ENCODE measurements at regions of chr17 and their contacts with region 1.

Region 1: DNA sequence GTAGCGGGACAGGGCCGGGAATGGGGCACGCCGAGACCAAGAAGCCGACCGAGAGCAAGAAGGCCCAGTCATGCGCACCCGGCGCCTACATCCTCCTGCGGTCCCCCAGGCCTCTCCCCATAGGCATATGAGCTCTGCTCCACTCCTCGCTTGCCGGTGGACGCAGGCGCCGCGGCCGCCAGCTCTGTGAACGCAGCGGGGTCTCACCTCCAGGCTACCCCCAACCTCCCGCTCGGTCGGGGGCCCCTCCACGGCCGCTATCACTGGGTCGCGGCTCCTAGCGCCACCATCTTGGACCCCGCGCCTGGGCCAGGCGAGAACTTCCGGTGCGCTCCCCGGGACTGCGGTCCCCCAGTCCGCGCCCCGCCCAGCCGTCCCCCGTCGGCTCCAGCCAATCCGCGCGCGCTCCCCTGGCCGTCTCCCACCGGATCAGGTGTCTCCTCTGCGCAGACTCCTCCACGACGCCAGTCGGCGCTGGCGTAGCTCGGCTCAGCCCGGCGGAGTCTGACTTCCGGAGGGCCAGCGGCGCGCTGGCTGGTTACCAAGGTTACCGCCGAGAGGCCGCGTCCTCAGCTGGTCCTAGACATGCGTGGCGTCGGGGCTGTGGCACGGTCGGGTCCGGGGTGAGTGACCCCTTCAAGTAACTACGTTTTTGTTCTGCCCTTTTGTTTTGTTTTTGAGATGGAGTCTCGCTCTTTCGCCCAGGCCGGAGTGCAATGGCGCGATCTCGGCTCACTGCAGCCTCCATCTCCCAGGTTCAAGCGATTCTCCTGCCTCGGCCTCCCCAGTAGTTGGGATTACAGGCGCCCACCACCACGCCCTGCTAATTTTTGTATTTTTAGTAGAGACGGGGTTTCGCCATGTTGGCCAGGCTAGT is at the start of gene ZNF594:
- DNase-seq: peak; percentile 97
- ATAC-seq: peak; percentile 99
- H3K4me3 ChIP-seq: peak within 1 kb of the TSS; percentile 53 to 99 (median 79)
- H3K4me3 Mint-ChIP-seq: peak within 1 kb of the TSS; percentile 95
- H3K27ac ChIP-seq: peak within 1 kb of the TSS; percentile 83 to 85
- H3K27ac Mint-ChIP-seq: peak within 1 kb of the TSS; percentile 94
- H3K4me1 ChIP-seq: peaks cover 16 to 25% of the 10 kb centered on the region in 2 donors
- H3K4me1 Mint-ChIP-seq: peaks cover 30% of the 10 kb centered on the region
- H3K27me3 ChIP-seq: no peaks in the 10 kb centered on the region
- H3K27me3 Mint-ChIP-seq: no peaks in the 10 kb centered on the region
- CTCF ChIP-seq: peak; percentile 75
- total RNA-seq, gene ZNF594: 36.2 and 38.9 TPM in 2 replicates

Region 2: DNA sequence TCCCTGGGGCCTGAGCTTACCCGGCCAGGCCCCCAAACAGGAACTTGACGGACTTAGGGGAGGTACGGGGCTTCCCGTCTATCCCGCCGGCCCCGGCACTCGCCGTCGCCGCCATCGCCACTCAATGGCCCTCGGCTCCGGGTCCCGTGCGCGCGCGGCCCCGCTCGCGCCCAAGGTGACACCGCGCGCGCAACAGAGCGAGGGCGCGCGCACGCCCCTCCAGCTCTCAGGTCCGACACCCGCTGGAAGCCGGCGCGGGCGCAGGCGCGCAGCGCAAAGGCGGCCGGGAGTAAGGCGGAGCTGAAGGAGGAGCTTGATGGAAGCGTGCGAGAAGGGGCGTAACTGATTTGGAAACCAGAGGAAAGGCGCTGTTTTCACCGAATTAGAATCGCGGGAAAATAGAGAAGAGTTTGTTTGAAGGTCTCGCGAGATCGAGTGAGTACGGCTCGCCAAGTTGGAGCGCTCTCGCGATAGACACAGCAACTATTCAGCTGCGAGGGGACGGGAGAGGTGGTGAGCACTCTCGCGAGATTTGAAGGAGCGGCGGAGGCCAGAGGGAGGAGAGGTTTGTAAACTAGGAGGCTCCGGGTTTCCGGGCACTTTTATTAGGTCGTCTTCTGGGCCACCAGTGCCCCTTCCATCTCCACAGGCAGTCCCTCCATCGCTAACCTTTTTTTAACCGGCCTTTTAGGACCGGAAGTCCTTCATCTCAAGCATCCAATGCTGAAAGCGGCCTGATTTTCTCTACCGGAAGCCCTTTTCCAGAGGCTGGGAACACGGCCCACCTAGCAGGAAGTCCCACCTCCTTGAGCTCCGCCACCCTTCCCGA is 251.8 kb before region 1 on chr17 and contains the starts of genes RNF167 and SLC25A11:
- CTCF ChIA-PET with region 1: no interaction called
- POLR2A ChIA-PET with region 1: interaction called, 7 read pairs
- intact Hi-C with region 1: loop called (anchors 10 kb)
- DNase-seq: peak; percentile 99
- ATAC-seq: peak; percentile 84
- H3K4me3 ChIP-seq: peak within 1 kb of the TSS; percentile 83 to 100 (median 86)
- H3K4me3 Mint-ChIP-seq: peak within 1 kb of the TSS; percentile 89
- H3K27ac ChIP-seq: peak within 1 kb of the TSS; percentile 84 to 87
- H3K27ac Mint-ChIP-seq: peak within 1 kb of the TSS; percentile 95
- H3K4me1 ChIP-seq: peaks cover 50 to 59% of the 10 kb centered on the region in 2 donors
- H3K4me1 Mint-ChIP-seq: peaks cover 58% of the 10 kb centered on the region
- H3K27me3 ChIP-seq: no peaks in the 10 kb centered on the region
- H3K27me3 Mint-ChIP-seq: no peaks in the 10 kb centered on the region
- CTCF ChIP-seq: no peak
- total RNA-seq, gene RNF167: 131 and 143 TPM in 2 replicates
- total RNA-seq, gene SLC25A11: 32.3 and 42.7 TPM in 2 replicates

Region 3: DNA sequence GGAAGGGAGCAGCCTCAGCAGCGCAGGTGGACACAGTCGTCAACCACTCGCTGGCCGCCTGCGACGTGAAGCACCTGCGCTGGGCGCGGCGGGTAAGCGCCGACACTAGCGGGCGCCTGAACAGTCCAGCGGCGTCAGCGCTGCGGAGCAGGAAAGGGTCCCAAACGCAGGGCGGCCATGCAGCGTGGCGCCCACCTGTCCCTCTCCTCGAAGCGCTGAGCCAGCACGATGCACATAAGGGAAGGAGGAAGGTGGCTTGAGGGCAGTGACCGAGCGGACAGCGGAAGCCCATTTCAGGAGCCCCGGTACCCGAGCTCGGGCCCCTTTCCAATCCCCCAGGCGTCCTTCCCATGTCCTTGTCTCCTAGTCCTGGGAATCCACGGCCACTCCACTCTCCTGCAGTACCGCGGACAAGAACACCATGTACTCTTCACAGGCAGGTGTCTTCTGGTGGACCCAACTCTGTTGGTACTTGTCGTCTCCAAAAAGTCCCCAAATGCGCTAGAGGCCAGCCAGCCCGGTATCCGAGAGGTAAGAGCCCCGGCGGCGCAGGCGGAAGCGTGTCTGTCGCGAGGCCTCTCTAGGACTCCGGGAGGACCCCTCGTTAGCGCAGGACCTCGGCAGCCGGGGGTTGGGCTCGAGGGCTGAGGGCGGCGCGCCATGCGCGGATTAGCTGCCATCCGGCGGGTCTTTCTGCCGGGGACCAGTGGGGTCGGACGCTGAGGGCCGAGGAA is 94.5 kb before region 1 on chr17:
- CTCF ChIA-PET with region 1: no interaction called
- POLR2A ChIA-PET with region 1: interaction called, 8 read pairs
- intact Hi-C with region 1: loop called (anchors 5 kb)
- DNase-seq: peak; percentile 81
- ATAC-seq: peak; percentile 93
- H3K4me3 ChIP-seq: peak overlapping the region; percentile 17 to 79 (median 71)
- H3K4me3 Mint-ChIP-seq: peak overlapping the region; percentile 97
- H3K27ac ChIP-seq: peak overlapping the region; percentile 33 to 76
- H3K27ac Mint-ChIP-seq: peak overlapping the region; percentile 90
- H3K4me1 ChIP-seq: peaks cover 4 to 14% of the 10 kb centered on the region in 2 donors
- H3K4me1 Mint-ChIP-seq: peaks cover 12% of the 10 kb centered on the region
- H3K27me3 ChIP-seq: peaks cover 0 to 3% (median 0%) of the 10 kb centered on the region in 4 experiments
- H3K27me3 Mint-ChIP-seq: no peaks in the 10 kb centered on the region
- CTCF ChIP-seq: no peak

Region 4: DNA sequence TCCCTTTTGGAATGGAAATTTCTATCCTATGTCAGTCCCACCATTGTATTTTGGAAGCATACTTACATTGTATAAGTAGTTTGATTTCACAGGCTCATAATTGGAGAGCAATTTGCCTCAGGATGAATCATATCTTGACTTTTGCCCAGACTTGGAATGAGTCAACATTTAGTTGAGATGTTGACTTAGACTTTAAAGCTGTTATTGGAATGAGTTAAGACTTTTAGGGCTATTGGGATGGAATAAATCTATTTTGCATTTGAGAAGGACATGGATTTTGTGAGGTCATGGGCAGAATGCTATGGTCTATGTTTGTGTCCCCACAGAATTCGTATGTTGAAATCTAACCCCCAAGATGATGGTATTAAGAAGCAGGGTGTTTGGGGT is 12.1 kb after region 1 on chr17:
- CTCF ChIA-PET with region 1: interaction called, 38 read pairs
- POLR2A ChIA-PET with region 1: no interaction called
- intact Hi-C with region 1: no loop called
- DNase-seq: no peak
- ATAC-seq: no peak
- H3K4me3 ChIP-seq: no peak overlapping the region
- H3K4me3 Mint-ChIP-seq: no peak overlapping the region
- H3K27ac ChIP-seq: peak overlapping the region in 1 of 2 donors; percentile 45
- H3K27ac Mint-ChIP-seq: peak overlapping the region; percentile 78
- H3K4me1 ChIP-seq: peaks cover 33 to 61% of the 10 kb centered on the region in 2 donors
- H3K4me1 Mint-ChIP-seq: peaks cover 54% of the 10 kb centered on the region
- H3K27me3 ChIP-seq: no peaks in the 10 kb centered on the region
- H3K27me3 Mint-ChIP-seq: no peaks in the 10 kb centered on the region
- CTCF ChIP-seq: no peak

Region 5: DNA sequence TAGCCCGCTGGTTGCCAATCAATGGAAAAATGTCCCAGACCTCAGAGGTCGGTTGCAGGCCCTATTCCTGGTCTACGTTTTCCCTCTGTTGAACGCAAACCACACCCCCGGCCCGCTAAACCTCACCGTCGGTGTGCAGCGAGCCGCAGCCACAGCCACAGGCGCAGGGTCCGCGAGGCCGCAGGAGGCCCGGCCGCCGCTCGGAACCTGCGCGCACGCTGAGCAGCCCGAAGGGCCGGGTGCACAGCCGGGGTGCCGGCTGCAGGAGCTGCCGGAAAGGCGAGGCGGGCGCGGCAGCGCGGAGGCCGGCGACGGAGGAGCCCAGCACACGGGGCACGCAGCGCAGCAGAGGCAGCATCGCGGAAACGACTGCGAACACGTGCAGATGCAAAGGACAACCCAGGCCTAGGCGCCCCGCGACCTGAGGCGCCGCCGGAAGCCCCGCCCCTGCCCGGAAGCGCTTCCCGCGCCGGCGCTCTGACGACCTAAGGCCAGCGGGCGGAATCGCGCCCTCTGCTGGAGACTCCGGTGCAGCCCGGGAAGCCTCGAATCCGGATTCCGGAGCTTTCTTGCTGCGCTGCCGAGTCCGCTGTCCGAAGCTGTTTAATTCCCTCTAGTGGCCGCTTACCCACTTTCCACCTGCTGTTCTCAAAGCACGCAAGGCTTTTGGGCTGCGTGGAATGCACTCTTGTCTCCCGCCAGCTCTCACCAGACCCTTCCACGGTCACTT is 247.1 kb after region 1 on chr17 and contains the start of gene C1QBP:
- CTCF ChIA-PET with region 1: interaction called, 16 read pairs
- POLR2A ChIA-PET with region 1: interaction called, 4 read pairs
- intact Hi-C with region 1: loop called (anchors 1 kb)
- DNase-seq: peak; percentile 96
- ATAC-seq: peak; percentile 95
- H3K4me3 ChIP-seq: peak within 1 kb of the TSS; percentile 52 to 74 (median 67)
- H3K4me3 Mint-ChIP-seq: peak within 1 kb of the TSS; percentile 79
- H3K27ac ChIP-seq: peak within 1 kb of the TSS; percentile 66 to 81
- H3K27ac Mint-ChIP-seq: peak within 1 kb of the TSS; percentile 93
- H3K4me1 ChIP-seq: peaks cover 14 to 26% of the 10 kb centered on the region in 2 donors
- H3K4me1 Mint-ChIP-seq: peaks cover 31% of the 10 kb centered on the region
- H3K27me3 ChIP-seq: no peaks in the 10 kb centered on the region
- H3K27me3 Mint-ChIP-seq: no peaks in the 10 kb centered on the region
- CTCF ChIP-seq: peak; percentile 99
- total RNA-seq, gene C1QBP: 60.1 and 62.2 TPM in 2 replicates